CD8-positive, alpha-beta T cell (primary cell): ENCODE measurements at regions of chr15 and their contacts with region 1.

Region 1: GRCh38 chr15:85419161-85419560 is 38.8 kb downstream of the AKAP13 start:
- DNase-seq: no peak
- ATAC-seq: no peak
- H3K4me3 ChIP-seq: no peak overlapping the region
- H3K4me3 Mint-ChIP-seq: no peak overlapping the region
- H3K27ac ChIP-seq: no peak overlapping the region
- H3K27ac Mint-ChIP-seq: no peak overlapping the region
- H3K4me1 ChIP-seq: peaks cover 43% of the 10 kb centered on the region
- H3K4me1 Mint-ChIP-seq: peaks cover 68% of the 10 kb centered on the region
- H3K27me3 ChIP-seq: no peaks in the 10 kb centered on the region
- H3K27me3 Mint-ChIP-seq: no peaks in the 10 kb centered on the region
- CTCF ChIP-seq: no peak

Region 2: DNA sequence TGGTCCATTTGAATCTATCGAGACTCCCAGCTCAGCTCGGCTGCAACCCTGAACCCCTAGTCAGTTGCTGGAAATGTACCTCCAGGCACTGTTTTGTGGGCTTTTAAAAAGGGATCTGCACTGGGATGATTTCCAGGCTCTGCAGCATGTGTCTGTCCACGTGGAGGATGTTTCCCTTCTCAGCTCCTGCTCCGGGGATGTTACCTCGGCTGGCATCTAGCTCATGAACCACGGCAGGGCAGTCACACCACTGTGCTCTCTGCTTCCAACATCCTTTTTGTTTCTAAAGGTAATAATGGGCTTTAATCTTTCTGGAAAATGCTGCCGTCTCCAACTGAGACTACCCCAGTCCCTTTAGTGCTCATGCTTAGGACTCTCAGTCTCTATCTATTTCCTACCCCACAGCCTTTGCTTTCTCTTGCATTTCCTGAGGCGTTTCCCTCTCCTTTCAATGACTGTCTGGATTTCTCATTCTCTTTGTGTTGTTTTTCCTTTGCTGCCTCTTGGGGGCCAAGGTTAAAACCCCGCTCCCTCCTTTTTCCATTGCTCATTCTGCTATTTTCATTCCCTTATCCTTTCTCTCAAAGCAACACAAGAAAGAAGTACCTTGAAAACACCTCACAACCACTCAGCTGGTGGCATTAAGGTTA is 81.6 kb before region 1 on chr15:
- CTCF ChIA-PET with region 1: interaction called, 75 read pairs
- POLR2A ChIA-PET with region 1: no interaction called
- intact Hi-C with region 1: loop called in 1 of 2 experiments (anchors 5 kb)
- DNase-seq: no peak
- ATAC-seq: no peak
- H3K4me3 ChIP-seq: no peak overlapping the region
- H3K4me3 Mint-ChIP-seq: no peak overlapping the region
- H3K27ac ChIP-seq: no peak overlapping the region
- H3K27ac Mint-ChIP-seq: no peak overlapping the region
- H3K4me1 ChIP-seq: no peaks in the 10 kb centered on the region
- H3K4me1 Mint-ChIP-seq: peaks cover 6% of the 10 kb centered on the region
- H3K27me3 ChIP-seq: no peaks in the 10 kb centered on the region
- H3K27me3 Mint-ChIP-seq: no peaks in the 10 kb centered on the region
- CTCF ChIP-seq: no peak